ENCODE measurements at regions of chr7 and their contacts with region 1.

Region 1: DNA sequence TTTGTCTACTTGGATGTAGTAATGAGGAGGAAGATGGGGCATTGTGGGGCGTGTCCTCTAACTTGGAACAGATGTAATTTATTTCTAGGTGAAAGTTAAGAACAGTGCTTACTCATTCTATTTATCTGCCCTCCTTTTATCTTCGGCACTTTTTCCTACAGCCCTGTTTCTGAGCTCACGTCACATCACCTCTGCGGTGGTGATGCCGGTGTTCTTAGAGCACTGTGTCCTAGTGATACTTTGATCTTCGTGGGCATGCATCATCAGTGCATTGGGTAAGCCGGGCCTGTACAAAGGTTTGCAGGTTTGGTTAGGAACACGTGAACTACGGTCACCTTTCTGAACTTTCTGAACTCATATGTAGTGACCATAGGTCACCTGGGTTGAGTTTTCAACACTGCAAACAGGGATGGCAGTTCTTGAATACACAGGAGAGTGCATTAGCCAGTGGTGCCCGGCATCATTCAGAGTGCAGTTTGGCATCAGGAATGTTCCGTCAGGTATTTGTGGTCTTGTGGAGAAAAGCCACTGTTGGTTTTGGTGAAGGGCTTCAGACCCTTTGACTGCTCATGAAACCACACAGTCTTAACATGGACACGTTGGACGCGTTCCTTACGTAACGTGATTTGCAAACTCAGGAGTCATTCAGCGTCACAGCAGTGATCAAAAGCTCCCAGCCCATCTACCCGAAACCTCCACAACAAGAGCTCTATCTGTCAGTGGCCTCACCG is 5.6 kb downstream of the POR start:
- DNase-seq: peak in 18 of 35 experiments; percentile 1 to 56 (median 14)
- ATAC-seq: peak; percentile 51 to 65 (median 57)
- H3K4me3 ChIP-seq: no peak overlapping the region
- H3K4me3 Mint-ChIP-seq: no peak overlapping the region
- H3K27ac ChIP-seq: no peak overlapping the region
- H3K27ac Mint-ChIP-seq: no peak overlapping the region
- H3K4me1 ChIP-seq: peaks cover 0 to 30% of the 10 kb centered on the region in 2 experiments
- H3K4me1 Mint-ChIP-seq: peaks cover 32 to 53% (median 53%) of the 10 kb centered on the region in 3 donors
- H3K27me3 ChIP-seq: no peaks in the 10 kb centered on the region
- H3K27me3 Mint-ChIP-seq: no peaks in the 10 kb centered on the region

Region 2: DNA sequence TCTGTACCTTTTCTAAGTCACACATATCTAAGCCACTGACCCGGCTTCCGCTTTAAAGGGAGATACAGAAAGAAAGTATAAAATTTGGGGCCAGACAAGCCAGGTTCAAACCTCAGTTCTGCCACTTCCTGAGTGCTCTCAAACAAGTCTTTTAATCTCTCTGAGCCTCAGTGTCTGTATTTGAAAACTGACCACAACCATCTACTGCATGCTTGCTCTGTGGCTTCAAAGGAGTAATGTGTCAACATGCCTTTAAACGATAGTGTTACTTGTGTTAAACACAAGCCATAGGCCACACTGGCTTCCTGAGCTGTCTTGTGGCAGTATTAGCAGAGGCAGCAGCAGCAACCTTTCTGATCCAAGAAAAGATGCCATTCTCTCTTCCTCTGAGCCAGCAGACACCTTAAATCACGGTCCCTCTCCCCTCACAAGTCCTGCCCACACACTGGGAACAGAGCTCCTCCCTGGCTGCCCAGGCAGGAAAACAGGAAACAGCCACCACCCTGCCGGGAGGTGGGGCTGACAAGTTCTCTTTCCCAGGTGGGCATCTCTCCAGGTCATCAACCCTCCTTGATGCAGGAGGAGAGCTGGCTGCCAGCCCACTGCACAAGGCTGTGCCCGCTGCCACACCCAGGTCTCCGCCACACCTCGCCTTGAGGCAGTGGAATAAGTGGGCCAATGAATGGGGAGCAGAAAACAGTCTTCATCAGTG is 192.6 kb before region 1 on chr7:
- CTCF ChIA-PET with region 1: no interaction called
- POLR2A ChIA-PET with region 1: no interaction called
- DNase-seq: peak in 31 of 35 experiments; percentile 6 to 79 (median 39)
- ATAC-seq: peak; percentile 82 to 86 (median 84)
- H3K4me3 ChIP-seq: peak overlapping the region; percentile 11 to 19
- H3K4me3 Mint-ChIP-seq: peak overlapping the region; percentile 41 to 50 (median 49)
- H3K27ac ChIP-seq: peak overlapping the region; percentile 75
- H3K27ac Mint-ChIP-seq: peak overlapping the region; percentile 88 to 93
- H3K4me1 ChIP-seq: peaks cover 6 to 43% of the 10 kb centered on the region in 2 experiments
- H3K4me1 Mint-ChIP-seq: peaks cover 17 to 43% (median 23%) of the 10 kb centered on the region in 3 donors
- H3K27me3 ChIP-seq: no peaks in the 10 kb centered on the region
- H3K27me3 Mint-ChIP-seq: no peaks in the 10 kb centered on the region

Region 3: DNA sequence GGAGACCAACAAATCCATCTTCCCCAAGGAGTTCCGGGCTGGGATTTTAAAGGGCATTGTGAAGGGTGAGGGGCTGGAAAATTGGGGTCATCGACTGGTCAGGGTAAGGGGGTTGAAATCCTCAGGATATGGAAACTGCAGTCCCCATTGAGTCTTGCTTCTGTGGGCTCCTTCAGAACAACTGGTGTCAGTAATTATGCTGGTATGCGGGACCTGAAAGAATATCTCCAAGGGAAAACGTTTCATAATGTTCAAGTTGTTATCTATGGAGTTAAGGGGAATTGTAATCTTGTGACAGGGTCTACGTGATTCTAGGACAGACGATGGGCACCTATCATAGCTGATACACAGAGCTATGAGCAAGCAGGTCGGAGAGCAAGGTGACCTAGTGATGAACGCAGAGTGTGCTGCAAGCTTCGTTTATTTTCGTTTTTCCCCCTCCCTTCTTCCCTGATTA is 42.3 kb before region 1 on chr7:
- CTCF ChIA-PET with region 1: interaction called, 3 to 5 read pairs
- POLR2A ChIA-PET with region 1: interaction called, 7 to 12 read pairs
- DNase-seq: no peak
- ATAC-seq: peak in 2 of 4 experiments; percentile 41 to 50
- H3K4me3 ChIP-seq: peak overlapping the region; percentile 35 to 60
- H3K4me3 Mint-ChIP-seq: peak overlapping the region; percentile 96 to 99 (median 97)
- H3K27ac ChIP-seq: peak overlapping the region; percentile 82
- H3K27ac Mint-ChIP-seq: peak overlapping the region; percentile 92 to 93
- H3K4me1 ChIP-seq: peaks cover 15 to 34% of the 10 kb centered on the region in 2 experiments
- H3K4me1 Mint-ChIP-seq: peaks cover 30 to 43% (median 40%) of the 10 kb centered on the region in 3 donors
- H3K27me3 ChIP-seq: no peaks in the 10 kb centered on the region
- H3K27me3 Mint-ChIP-seq: no peaks in the 10 kb centered on the region

Region 4: DNA sequence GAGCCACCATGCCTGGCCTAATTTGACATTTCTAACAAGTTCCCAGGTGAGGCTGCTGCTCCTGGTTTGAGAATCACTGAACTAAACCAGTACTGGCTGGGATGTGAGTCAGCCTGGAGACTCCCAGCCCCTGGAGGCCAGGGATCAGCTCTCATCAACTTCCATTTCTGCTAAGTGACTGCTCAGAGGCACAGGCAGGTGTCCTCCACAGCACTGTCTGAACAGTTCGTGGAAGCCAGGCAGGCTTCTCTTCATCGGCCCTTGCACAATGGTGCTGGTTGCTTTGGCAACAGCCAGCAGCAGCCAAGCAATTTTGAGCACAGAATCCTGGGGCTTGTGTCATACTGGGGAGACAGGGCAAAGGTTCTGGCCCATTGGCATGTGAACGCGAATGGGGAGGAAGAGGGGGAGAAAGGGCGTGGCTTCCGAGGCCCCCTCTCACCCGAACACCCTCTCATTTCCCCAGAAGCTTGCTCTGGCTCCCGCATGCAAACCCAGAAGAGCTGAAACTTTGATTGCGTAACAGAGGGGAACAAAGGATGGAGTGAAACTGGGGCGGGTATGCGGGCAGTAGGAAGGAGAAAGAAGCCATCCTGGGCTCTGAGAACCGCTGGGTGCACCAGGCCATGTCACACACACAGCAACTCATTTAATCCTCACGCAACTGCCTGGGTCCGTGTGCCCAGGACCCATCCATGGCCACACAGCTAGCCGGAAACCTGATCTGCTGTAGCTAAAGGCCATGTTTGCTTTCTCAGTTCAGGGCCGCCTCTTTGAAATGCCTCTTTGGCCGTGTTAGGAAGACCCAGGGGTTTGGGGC is 14.6 kb before region 1 on chr7:
- CTCF ChIA-PET with region 1: no interaction called
- POLR2A ChIA-PET with region 1: interaction called, 11 to 14 read pairs
- DNase-seq: peak in 1 of 35 experiments; percentile 25
- ATAC-seq: no peak
- H3K4me3 ChIP-seq: no peak overlapping the region
- H3K4me3 Mint-ChIP-seq: no peak overlapping the region
- H3K27ac ChIP-seq: no peak overlapping the region
- H3K27ac Mint-ChIP-seq: no peak overlapping the region
- H3K4me1 ChIP-seq: no peaks in the 10 kb centered on the region
- H3K4me1 Mint-ChIP-seq: no peaks in the 10 kb centered on the region
- H3K27me3 ChIP-seq: peaks cover 0 to 6% of the 10 kb centered on the region in 2 experiments
- H3K27me3 Mint-ChIP-seq: no peaks in the 10 kb centered on the region

Region 5: GRCh38 chr7:75943864-75944263 is 23.3 kb after region 1 on chr7:
- CTCF ChIA-PET with region 1: no interaction called
- POLR2A ChIA-PET with region 1: no interaction called
- DNase-seq: no peak
- ATAC-seq: no peak
- H3K4me3 ChIP-seq: no peak overlapping the region
- H3K4me3 Mint-ChIP-seq: no peak overlapping the region
- H3K27ac ChIP-seq: no peak overlapping the region
- H3K27ac Mint-ChIP-seq: no peak overlapping the region
- H3K4me1 ChIP-seq: no peaks in the 10 kb centered on the region
- H3K4me1 Mint-ChIP-seq: peaks cover 8 to 16% (median 15%) of the 10 kb centered on the region in 3 donors
- H3K27me3 ChIP-seq: no peaks in the 10 kb centered on the region
- H3K27me3 Mint-ChIP-seq: no peaks in the 10 kb centered on the region

Measured in T-cell (primary cell).